ENCODE measurements at regions of chr9 and their contacts with region 1.

Region 1: DNA sequence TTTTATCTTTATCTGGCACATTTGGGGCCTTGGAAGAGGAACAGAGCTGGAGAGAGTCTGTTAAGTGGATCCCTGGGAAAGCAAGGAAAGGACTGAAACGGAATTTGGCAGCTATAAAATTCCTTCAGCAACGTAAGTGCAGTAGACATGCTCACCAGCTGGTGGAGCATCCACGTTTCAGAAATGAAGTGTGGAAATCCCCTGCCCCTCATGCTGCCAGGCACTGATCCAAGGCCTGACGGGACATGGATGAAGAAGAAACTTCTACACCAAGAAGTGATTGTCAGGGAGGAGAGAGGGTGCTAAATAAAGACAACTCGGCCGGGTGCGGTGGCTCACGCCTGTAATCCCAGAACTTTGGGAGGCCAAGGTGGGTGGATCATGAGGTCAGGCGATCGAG is 209.3 kb downstream of the ROR2 start:
- DNase-seq: no peak
- H3K4me3 ChIP-seq: no peak overlapping the region
- H3K27ac ChIP-seq: peak overlapping the region; percentile 3 to 65 (median 31)
- H3K4me1 ChIP-seq: peaks cover 0 to 23% (median 21%) of the 10 kb centered on the region in 4 donors
- H3K27me3 ChIP-seq: no peaks in the 10 kb centered on the region
- CTCF ChIP-seq: peak; percentile 36 to 55 (median 55)
- EP300 ChIP-seq: no peak
- POLR2A ChIP-seq: no peak

Region 2: DNA sequence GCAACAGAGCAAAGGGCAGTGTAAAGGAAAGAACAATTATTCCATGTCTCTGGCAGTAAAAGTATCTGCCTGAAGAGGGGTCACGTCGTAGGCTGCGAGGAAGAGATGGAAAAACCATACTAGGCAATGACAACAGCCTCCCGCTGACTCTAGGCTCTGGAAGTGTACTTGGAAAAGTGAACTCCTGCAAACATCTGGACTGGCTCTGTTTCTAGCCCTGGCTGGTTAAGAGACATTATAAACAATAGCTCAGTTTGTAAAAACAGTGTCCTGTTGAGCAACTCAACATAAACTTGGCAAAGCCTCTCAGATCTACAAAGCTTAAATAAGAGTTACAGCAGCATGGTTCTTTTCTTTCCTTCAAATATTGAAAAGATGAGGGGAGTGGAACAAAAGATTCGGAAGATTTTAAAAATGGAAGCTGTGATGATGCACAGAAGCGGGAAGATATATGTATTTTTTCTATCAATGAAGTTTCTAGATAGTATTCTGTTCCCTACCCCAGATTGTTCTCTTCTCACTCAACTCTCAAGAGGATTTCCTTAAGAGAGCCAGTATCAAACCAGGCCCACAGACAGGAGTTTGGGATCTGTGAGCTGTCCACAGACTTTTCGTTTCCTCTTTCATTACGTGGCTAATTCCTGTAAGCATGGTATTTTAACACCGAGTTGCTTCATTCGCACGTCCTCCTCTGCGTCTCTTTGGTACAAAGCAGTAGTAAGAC is 295.1 kb after region 1 on chr9:
- intact Hi-C with region 1: loop called (anchors 10 kb)
- DNase-seq: no peak
- H3K4me3 ChIP-seq: no peak overlapping the region
- H3K27ac ChIP-seq: peak overlapping the region; percentile 57 to 81 (median 72)
- H3K4me1 ChIP-seq: peaks cover 0 to 49% (median 42%) of the 10 kb centered on the region in 4 donors
- H3K27me3 ChIP-seq: no peaks in the 10 kb centered on the region
- CTCF ChIP-seq: no peak
- EP300 ChIP-seq: no peak
- POLR2A ChIP-seq: no peak

Region 3: DNA sequence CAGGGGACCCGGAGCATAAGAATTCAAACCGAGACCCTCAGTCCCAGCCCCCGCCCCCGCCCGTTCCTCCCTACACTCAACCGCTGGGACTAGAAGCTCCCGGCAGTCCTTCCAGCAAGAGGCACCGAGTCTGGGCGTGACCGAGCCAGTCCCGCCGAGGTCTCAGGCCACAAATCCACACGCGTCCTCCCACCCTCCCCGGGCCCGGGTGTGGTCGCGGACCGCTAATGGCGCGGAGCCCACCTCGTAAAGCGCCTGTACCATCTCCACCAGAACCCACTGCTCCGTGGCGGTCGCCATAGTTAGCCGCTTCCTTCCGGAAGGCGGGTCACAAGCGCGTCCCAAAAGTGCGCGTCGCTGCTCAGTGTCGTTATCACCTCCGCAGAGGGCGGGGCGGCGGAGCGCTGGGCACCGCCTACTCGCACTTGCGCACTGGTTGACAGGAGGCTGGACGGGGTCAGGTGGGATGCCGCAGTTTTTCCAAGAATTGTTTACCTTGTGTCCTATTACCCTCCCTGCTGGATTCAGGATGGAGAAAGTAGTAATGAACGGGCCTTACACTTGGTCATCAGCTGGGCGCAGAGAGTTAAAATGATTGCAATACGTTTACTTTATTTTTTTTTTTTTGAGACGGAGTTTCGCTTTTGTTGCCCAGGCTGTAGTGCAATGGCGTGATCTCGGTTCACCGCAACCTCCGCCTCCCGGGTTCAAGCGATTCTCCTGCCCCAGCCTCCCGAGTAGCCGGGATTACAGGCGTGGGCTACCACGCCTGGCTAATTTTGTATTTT is 374.6 kb after region 1 on chr9 and contains the start of gene SPTLC1:
- intact Hi-C with region 1: loop called (anchors 10 kb)
- DNase-seq: peak; percentile 99
- H3K4me3 ChIP-seq: peak within 1 kb of the TSS; percentile 70 to 82 (median 80)
- H3K27ac ChIP-seq: peak within 1 kb of the TSS; percentile 85 to 91 (median 86)
- H3K4me1 ChIP-seq: peaks cover 12 to 29% (median 24%) of the 10 kb centered on the region in 4 donors
- H3K27me3 ChIP-seq: no peaks in the 10 kb centered on the region
- CTCF ChIP-seq: peak in 1 of 3 experiments; percentile 43
- EP300 ChIP-seq: no peak
- POLR2A ChIP-seq: peak; percentile 84
- total RNA-seq, gene SPTLC1: 50.0 to 57.8 (median 52.5) TPM

Measured in esophagus muscularis mucosa (tissue), 4 donors.